ENCODE measurements at regions of chr12 and their contacts with region 1.

Region 1: GRCh38 chr12:56158029-56158925 is at the start of gene MYL6:
- DNase-seq: peak; percentile 97
- ATAC-seq: peak; percentile 91
- total RNA-seq, gene MYL6: 1,071 to 1,319 TPM

Region 2: DNA sequence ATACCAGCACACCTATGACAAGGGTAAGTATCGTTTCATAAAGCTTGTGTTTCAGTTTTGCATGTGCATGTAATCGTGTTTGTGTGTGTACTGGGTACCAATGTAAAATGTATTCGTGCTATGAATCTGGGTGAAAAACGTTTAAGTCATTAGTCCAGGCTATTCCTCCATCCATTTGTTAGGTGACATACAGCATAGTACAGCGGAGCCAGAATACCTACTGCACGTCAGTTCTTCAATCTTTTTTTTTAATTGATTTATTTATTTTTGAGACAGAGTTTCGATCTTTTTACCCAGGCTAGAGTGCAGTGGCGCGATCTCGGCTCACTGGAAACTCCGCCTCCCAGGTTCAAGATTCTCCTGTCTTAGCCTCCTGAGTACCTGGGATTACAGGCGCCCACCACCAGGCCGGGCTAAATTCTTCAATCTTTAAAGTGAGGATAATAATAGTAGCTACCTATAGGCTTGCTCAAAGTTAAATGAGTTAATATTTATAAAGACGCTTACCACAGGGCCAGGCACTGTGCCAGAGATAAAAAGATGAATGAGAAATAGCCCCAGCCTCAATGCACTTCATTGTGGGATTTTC is 117.2 kb before region 1 on chr12:
- intact Hi-C with region 1: no loop called
- DNase-seq: no peak
- ATAC-seq: peak in 1 of 2 donors; percentile 4

Region 3: DNA sequence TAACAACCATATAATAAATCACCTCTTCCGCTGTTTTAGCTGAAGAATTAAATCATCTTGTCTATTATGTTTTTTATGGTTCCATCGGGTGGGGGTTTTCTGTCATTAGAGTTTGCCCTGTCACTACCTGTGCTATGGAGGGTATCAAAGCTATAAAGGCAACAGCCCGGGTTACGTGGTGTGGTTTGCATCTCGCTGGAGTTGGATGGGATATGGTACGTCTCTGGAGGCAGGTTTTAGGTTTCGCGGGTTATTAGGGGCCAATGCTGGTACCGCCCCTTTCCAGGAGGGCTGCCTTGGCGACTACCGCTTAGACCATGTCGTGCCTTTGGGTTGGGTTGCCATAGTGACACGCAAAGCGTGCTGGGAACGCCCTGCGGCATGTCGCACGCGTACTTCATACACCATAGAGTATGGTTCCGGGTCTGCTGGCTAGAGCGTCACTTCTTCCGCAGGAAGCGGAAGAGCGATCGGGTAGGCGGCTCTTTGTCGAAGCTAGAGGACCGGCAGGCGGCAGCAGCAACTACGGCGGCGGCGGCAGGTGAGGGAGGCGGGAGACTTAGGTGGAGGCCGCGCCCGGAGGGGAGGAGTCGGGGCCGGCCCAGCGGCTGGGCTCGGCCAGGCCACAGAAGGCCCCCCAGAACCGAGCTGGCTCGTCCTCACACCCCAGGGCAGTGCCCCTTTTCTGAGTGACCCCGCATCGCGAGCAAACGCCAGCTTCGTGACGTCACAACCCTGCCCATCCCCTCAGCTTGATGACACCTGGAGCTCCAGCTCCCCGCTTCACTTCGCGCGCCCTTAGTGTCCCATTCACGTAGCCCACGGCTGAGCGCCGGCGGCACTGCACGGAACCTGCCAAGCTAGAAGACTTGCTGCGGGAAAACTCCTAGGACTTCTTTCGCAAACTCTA is 40.2 kb before region 1 on chr12 and contains the start of gene ZC3H10:
- intact Hi-C with region 1: loop called in 1 of 2 experiments (anchors 5 kb)
- DNase-seq: peak; percentile 98
- ATAC-seq: peak; percentile 84 to 87
- total RNA-seq, gene ZC3H10: 6.6 to 7.6 TPM

Region 4: DNA sequence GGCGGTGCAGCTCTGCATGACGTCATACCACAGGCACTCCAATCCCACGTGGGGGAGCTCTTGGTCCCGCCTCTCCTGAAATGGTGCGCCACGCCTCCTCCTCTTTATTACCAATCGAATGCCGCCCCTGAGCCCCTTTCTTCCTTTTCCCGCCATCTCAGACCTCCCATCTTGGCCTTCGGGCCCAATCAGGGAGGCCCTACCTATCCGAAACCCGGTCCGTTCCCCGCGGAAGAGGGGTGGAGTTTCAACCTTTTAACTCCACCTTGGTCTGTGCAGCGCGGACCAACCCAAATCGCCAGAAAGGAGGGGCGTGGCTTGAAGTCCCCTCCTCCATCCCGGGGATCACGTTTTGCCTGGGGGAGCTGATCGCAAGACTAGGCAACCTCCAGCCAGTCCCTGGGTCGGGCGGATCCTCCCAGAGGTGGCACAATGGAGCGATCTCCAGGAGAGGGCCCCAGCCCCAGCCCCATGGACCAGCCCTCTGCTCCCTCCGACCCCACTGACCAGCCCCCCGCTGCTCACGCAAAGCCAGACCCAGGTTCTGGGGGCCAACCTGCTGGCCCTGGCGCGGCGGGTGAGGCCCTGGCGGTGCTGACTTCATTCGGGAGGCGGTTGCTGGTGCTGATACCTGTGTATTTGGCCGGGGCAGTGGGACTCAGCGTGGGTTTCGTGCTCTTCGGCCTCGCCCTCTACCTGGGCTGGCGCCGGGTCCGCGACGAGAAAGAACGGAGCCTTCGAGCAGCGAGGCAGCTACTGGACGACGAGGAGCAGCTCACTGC is 30.2 kb before region 1 on chr12 and contains the start of gene ESYT1:
- intact Hi-C with region 1: loop called in 1 of 2 experiments (anchors 2 kb)
- DNase-seq: peak; percentile 98
- ATAC-seq: peak; percentile 95 to 96
- total RNA-seq, gene ESYT1: 54.1 to 63.9 TPM